ENCODE measurements at regions of chr13 and their contacts with region 1.

Region 1: DNA sequence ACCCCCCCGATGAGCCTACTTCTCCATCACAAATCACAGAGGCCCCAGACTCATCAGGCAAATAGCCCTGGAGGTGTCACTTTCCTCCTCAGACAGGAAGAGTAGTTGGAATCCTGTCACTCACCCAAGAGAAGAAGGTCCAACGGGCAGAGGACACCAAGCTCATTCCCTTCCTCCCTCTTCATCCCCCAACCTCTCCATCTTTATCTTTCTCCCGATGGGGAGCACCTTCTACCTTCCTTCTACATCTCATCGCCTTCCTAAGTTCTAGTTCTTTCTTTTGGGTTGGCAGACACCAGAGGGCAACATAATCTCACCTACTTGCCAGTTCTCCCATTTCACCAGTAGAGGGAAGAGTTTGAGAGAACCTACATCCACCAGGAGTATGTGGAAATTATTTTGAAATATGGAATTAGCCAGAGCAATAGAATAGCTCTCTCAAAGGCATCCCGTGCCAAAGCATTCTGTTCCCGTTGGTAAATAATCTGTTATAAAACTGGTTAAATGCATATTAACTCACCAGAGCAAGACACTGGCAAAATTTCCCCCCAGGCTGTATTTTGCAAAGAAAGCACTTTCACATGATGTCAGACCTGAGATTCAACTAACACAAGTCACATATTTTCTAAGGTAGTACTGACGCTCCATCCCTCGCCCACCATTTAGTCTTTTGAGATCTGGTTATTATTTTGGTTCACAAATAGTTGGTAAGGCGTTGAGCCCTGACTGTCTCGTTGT is 55.0 kb downstream of the ZIC5 start:
- DNase-seq: peak; percentile 72
- H3K4me3 ChIP-seq: no peak overlapping the region
- H3K27ac ChIP-seq: no peak overlapping the region
- H3K4me1 ChIP-seq: no peaks in the 10 kb centered on the region
- H3K27me3 ChIP-seq: peaks cover 0 to 10% of the 10 kb centered on the region in 2 experiments
- CTCF ChIP-seq: peak; percentile 78 to 83
- POLR2A ChIP-seq: no peak

Region 2: DNA sequence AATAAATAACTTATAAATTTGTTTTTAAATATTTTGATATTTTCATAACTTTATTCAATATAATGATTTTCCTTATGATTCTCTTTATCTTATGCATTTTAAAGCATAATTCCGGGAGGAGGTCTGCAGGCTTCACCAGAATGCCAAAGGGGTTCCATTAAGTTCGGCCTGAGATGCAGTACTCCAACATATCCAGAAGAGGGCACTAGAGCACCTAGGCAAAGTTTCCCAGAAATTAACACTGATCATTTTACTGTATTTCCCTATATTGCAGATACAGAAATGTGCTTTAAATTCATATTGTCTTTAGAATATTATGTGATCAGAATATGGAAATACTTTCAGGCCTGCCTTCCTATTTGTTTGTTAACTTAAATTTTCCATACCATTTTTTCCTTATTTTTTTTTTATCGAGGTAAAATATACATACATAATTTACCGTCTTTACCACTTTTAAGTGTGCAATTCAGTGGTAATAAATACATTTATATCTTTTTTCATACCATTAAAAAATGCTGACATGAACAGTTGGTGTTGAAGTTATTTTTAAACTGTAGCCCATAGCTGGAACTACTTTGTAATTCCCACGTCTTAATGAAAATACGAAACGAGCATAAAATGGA is 474.2 kb before region 1 on chr13:
- CTCF ChIA-PET with region 1: no interaction called
- POLR2A ChIA-PET with region 1: no interaction called
- dilution Hi-C with region 1: no loop called
- intact Hi-C with region 1: loop called (anchors 10 kb)
- DNase-seq: peak; percentile 58
- H3K4me3 ChIP-seq: no peak overlapping the region
- H3K27ac ChIP-seq: no peak overlapping the region
- H3K4me1 ChIP-seq: no peaks in the 10 kb centered on the region
- H3K27me3 ChIP-seq: peaks cover 13 to 29% of the 10 kb centered on the region in 2 experiments
- CTCF ChIP-seq: peak; percentile 66 to 77
- POLR2A ChIP-seq: no peak

Region 3: GRCh38 chr13:99900960-99901359 is 15.6 kb before region 1 on chr13:
- CTCF ChIA-PET with region 1: interaction called, 11 read pairs
- POLR2A ChIA-PET with region 1: interaction called, 5 read pairs
- dilution Hi-C with region 1: no loop called
- intact Hi-C with region 1: no loop called
- DNase-seq: no peak
- H3K4me3 ChIP-seq: no peak overlapping the region
- H3K27ac ChIP-seq: no peak overlapping the region
- H3K4me1 ChIP-seq: no peaks in the 10 kb centered on the region
- H3K27me3 ChIP-seq: peaks cover 26 to 31% of the 10 kb centered on the region in 2 experiments
- CTCF ChIP-seq: no peak
- POLR2A ChIP-seq: no peak

Region 4: GRCh38 chr13:100542826-100543156 is 626.3 kb after region 1 on chr13:
- CTCF ChIA-PET with region 1: no interaction called
- POLR2A ChIA-PET with region 1: no interaction called
- dilution Hi-C with region 1: no loop called
- intact Hi-C with region 1: loop called (anchors 1 kb)
- DNase-seq: peak; percentile 52
- H3K4me3 ChIP-seq: no peak overlapping the region
- H3K27ac ChIP-seq: no peak overlapping the region
- H3K4me1 ChIP-seq: peaks cover 13% of the 10 kb centered on the region
- H3K27me3 ChIP-seq: no peaks in the 10 kb centered on the region
- CTCF ChIP-seq: peak; percentile 28 to 35
- POLR2A ChIP-seq: no peak